ENCODE measurements at regions of chr22 and their contacts with region 1.

Region 1: GRCh38 chr22:46035742-46036557 is 59.0 kb upstream of the WNT7B start:
- DNase-seq: peak; percentile 99 to 100 (median 100)
- ATAC-seq: peak; percentile 88
- H3K4me3 ChIP-seq: peak overlapping the region; percentile 73 to 94
- H3K4me3 Mint-ChIP-seq: peak overlapping the region; percentile 84
- H3K27ac ChIP-seq: peak overlapping the region; percentile 98 to 100
- H3K27ac Mint-ChIP-seq: peak overlapping the region; percentile 97
- H3K4me1 ChIP-seq: peaks cover 18% of the 10 kb centered on the region
- H3K4me1 Mint-ChIP-seq: peaks cover 16% of the 10 kb centered on the region
- H3K27me3 ChIP-seq: no peaks in the 10 kb centered on the region
- H3K27me3 Mint-ChIP-seq: no peaks in the 10 kb centered on the region
- CTCF ChIP-seq: no peak

Region 2: DNA sequence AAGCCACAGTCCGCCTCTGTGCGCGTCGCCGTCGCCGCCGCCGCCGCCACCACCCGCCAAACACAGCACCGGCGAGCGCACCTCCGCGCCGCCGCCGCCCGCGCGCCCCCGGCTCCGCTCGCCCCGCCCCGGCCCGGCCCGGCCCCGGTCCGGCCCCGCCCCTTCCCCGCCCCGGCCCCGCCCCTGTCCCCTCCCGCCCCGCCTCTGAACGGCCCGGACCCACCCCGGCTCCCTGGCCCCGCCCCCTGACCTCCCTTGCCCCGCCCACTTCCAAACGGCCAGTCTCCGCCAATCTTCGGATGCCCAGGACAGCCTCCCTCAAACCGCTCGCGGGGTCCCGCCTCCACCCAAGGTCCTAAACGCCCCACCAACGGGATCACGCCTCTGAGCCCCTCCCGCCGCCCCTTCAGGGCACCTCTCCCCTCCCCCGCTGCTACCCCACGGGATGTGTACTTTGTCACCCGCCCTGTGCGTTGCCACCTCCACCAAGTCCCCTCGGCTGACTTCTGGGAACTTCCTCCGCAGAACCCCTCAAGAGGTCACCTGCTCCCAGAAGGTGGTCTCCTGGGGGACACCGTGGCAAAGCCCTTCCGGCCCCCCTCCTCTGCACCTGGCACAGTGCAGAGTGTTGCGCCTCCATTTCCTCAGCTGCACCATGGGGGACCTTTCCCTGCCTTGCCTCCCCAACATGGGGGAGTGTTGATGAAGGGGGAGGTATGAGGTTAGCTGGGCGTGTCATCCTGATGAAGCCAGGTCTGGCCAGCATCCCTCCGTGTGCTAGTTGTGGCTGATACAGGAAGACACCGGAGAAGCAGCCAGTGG is 794.9 kb before region 1 on chr22 and contains the start of gene KIAA0930:
- CTCF ChIA-PET with region 1: no interaction called
- POLR2A ChIA-PET with region 1: no interaction called
- intact Hi-C with region 1: loop called in 1 of 2 experiments (anchors 10 kb)
- DNase-seq: peak; percentile 73 to 93 (median 82)
- ATAC-seq: peak; percentile 75
- H3K4me3 ChIP-seq: peak within 1 kb of the TSS; percentile 70 to 76
- H3K4me3 Mint-ChIP-seq: peak within 1 kb of the TSS; percentile 91
- H3K27ac ChIP-seq: peak within 1 kb of the TSS; percentile 20 to 75
- H3K27ac Mint-ChIP-seq: peak within 1 kb of the TSS; percentile 87
- H3K4me1 ChIP-seq: peaks cover 28% of the 10 kb centered on the region
- H3K4me1 Mint-ChIP-seq: peaks cover 47% of the 10 kb centered on the region
- H3K27me3 ChIP-seq: no peaks in the 10 kb centered on the region
- H3K27me3 Mint-ChIP-seq: no peaks in the 10 kb centered on the region
- CTCF ChIP-seq: no peak
- total RNA-seq, gene KIAA0930: 6.6 to 11.7 TPM

Region 3: DNA sequence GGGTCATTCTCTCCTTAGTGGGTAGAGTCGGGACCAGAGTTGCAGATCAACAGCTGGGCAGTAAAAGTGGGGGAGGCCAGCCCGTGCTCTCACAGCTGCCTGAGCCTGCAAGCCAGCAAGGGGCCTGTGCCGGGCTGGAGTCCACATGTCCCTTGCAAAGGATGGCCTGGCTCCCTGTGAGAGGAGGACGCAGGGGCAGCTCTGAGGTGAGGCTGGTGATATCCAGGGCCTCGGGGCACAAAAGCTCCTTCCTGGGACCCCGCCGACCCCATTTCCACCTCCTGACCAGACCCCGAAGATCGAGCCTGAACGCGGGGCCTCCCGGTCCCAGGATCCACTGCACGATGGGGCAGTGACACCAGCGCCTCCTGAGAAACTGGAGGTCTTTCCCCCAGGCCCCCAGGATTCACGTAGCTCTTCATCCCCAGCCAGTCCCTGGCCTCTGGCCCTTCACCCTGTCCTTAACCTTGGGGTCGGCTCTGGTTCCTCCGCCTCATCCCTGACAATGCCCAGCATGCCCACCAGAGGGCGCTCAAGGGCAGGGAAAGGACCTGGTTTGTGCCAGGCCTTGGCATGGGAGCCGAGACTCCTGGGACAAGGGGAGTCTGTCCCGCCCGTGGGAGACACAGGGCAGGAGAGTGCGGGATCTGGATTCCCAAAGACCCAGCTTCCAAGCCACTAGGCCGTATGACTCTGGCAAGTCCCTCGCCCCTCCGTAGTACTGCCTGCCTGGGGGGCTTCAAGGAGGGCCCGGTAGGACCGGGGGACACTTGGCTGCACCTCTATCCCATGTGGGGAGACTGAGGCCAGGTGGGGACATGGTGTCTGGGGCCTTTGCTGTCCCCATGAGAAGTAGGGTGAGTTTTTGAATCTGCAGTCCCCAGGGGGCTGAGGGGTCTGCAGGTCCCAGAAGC is 41.2 kb before region 1 on chr22:
- CTCF ChIA-PET with region 1: interaction called, 14 read pairs
- POLR2A ChIA-PET with region 1: interaction called, 3 read pairs
- intact Hi-C with region 1: loop called in 1 of 2 experiments (anchors 5 kb)
- DNase-seq: peak; percentile 63 to 92 (median 75)
- ATAC-seq: peak; percentile 85
- H3K4me3 ChIP-seq: no peak overlapping the region
- H3K4me3 Mint-ChIP-seq: no peak overlapping the region
- H3K27ac ChIP-seq: peak overlapping the region in 1 of 2 experiments; percentile 59
- H3K27ac Mint-ChIP-seq: no peak overlapping the region
- H3K4me1 ChIP-seq: peaks cover 7% of the 10 kb centered on the region
- H3K4me1 Mint-ChIP-seq: peaks cover 7% of the 10 kb centered on the region
- H3K27me3 ChIP-seq: no peaks in the 10 kb centered on the region
- H3K27me3 Mint-ChIP-seq: no peaks in the 10 kb centered on the region
- CTCF ChIP-seq: peak; percentile 94

Region 4: DNA sequence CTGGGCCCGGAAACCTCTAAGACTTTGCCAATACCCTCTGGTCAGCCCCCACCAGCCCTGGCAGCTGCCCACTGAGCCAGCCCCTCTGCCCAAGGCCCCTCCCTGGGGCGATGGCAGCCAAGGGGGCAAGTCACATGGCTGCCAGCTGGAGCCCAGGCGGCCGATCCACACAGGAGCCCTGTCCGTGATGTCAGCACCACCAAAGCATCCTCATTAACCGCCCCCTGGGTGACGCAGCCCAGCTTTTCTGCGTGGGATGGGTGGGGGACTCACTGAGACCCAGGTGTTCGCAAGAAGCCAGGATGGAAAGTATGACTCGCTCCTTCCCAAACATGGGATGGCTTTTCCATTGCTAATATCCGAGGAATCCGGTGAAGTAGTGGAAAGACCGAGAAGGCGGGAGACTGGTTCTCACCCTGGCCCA is 12.4 kb before region 1 on chr22:
- CTCF ChIA-PET with region 1: no interaction called
- POLR2A ChIA-PET with region 1: no interaction called
- intact Hi-C with region 1: no loop called
- DNase-seq: no peak
- ATAC-seq: no peak
- H3K4me3 ChIP-seq: no peak overlapping the region
- H3K4me3 Mint-ChIP-seq: no peak overlapping the region
- H3K27ac ChIP-seq: no peak overlapping the region
- H3K27ac Mint-ChIP-seq: no peak overlapping the region
- H3K4me1 ChIP-seq: peaks cover 2% of the 10 kb centered on the region
- H3K4me1 Mint-ChIP-seq: peaks cover 8% of the 10 kb centered on the region
- H3K27me3 ChIP-seq: peaks cover 4 to 11% of the 10 kb centered on the region in 2 experiments
- H3K27me3 Mint-ChIP-seq: peaks cover 36% of the 10 kb centered on the region
- CTCF ChIP-seq: no peak

Region 5: DNA sequence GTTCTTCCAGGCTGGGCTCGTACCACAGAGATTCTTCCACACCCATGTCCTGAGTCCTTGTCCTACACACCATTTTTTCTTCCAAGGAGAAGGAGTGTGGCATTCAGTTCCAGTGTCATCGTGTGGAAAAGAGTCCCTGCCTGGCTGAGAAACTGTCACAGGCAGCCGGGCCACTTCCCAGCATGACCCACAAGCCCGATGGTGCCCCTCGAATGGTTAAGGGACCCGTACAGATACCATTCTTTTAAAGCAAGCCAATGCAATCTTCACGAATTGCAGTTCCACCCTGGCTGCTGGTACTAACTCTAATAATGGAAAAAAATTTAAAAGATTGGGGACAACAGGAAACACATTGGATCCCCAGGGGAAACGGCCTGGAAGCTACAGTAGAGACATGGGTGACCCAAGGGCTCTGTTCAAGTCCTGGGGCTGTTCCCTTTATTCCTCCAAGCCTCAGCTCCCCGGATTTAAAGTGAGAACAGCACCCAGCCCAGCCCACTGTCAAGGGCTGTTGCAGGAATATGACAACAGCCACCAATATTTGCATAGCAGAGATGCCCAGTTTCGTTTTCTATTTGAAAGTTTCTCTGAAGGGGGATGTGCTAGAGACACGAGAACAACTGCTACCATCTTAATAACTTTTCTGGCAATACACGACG is 21.9 kb after region 1 on chr22:
- CTCF ChIA-PET with region 1: interaction called, 12 read pairs
- POLR2A ChIA-PET with region 1: interaction called, 17 read pairs
- intact Hi-C with region 1: loop called in 1 of 2 experiments (anchors 1 kb)
- DNase-seq: peak in 3 of 9 experiments; percentile 27 to 61 (median 44)
- ATAC-seq: peak; percentile 55
- H3K4me3 ChIP-seq: no peak overlapping the region
- H3K4me3 Mint-ChIP-seq: peak overlapping the region; percentile 54
- H3K27ac ChIP-seq: peak overlapping the region in 1 of 2 experiments; percentile 45
- H3K27ac Mint-ChIP-seq: peak overlapping the region; percentile 86
- H3K4me1 ChIP-seq: peaks cover 35% of the 10 kb centered on the region
- H3K4me1 Mint-ChIP-seq: peaks cover 38% of the 10 kb centered on the region
- H3K27me3 ChIP-seq: no peaks in the 10 kb centered on the region
- H3K27me3 Mint-ChIP-seq: peaks cover 7% of the 10 kb centered on the region
- CTCF ChIP-seq: no peak

Region 6: DNA sequence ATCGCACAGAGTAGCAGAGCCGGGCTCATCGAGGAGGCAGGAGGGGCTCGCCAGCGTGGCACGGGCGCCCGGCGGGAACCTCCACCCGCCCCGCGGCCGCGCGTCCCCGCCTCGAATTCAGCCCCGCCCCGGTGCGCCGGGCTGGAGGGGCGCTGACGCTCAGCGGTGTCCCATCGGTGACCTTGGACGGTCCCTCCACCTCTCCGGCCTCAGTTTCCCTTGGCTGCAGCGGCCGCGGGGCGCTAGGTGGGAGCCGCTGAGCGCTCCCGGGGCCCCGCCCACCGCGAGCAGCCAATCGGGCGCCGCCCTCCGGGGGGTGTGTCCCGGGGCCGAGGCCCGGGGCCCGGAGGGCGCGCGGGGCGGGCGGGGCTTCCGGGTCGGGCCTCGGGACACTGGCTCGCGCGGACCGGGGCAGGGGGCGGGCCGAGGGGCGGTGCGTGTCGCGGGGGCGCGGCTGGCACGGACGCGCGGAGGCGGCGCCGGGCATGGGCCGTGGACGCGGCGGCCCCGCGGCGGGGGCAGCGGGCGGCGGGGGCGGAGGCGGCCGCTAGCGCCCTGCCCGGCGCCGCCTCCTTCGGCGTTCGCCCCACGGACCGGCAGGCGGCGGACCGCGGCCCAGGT is 114.2 kb after region 1 on chr22 and contains the start of gene PPARA:
- CTCF ChIA-PET with region 1: interaction called, 3 read pairs
- POLR2A ChIA-PET with region 1: interaction called, 10 read pairs
- intact Hi-C with region 1: loop called in 1 of 2 experiments (anchors 1 kb)
- DNase-seq: peak; percentile 60 to 93 (median 89)
- ATAC-seq: peak; percentile 77
- H3K4me3 ChIP-seq: peak within 1 kb of the TSS; percentile 82 to 91
- H3K4me3 Mint-ChIP-seq: peak within 1 kb of the TSS; percentile 83
- H3K27ac ChIP-seq: peak within 1 kb of the TSS; percentile 46 to 60
- H3K27ac Mint-ChIP-seq: peak within 1 kb of the TSS; percentile 89
- H3K4me1 ChIP-seq: peaks cover 21% of the 10 kb centered on the region
- H3K4me1 Mint-ChIP-seq: peaks cover 20% of the 10 kb centered on the region
- H3K27me3 ChIP-seq: no peaks in the 10 kb centered on the region
- H3K27me3 Mint-ChIP-seq: no peaks in the 10 kb centered on the region
- CTCF ChIP-seq: no peak
- total RNA-seq, gene PPARA: 4.4 to 6.9 TPM

Region 7: DNA sequence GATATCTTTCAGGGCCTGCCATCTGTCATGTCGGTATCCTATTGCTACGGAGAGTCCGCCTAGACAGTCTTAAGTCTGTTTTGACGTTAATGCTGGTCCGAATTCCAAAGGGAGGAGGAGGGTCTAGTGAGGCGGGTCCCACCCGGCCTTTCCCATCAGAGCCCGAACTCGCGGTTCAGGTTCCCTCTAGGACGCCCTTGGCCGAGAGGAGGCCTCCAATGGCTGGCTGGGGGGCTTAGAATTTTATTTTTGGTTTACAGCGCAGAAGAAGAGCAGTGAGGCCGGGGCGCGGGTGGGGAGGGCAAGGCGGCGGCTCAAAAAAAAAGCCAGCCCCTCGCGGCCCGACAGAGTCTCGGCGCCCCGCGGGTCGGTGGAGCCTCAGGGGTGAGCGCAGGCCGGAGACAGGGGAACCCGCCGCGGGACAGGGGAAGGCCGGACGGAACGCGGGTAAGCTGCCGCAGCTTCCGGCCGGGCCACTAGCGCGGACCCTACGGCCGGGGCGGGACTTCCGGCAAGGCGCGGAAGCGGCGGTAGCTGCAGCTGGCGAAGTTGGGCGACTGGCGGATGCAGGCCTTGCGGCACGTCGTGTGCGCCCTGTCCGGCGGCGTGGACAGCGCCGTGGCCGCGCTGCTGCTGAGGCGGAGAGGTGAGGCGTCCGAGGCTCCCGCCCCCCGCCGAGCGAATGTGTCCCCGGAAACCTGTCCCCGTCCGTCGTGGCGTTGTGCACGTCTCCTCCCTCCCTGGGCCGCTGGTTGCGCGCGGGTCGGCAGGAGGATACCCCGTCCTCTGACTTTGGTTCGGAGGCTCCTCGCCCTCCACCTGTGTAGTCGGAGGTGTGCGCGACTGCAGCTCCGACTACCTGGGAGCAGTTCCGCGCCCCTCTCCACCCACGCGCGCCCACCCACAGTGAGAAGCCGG is 299.5 kb after region 1 on chr22 and contains the start of gene TRMU:
- CTCF ChIA-PET with region 1: no interaction called
- POLR2A ChIA-PET with region 1: no interaction called
- intact Hi-C with region 1: loop called in 1 of 2 experiments (anchors 2 kb)
- DNase-seq: peak; percentile 29 to 86 (median 75)
- ATAC-seq: peak; percentile 80
- H3K4me3 ChIP-seq: peak within 1 kb of the TSS; percentile 80 to 94
- H3K4me3 Mint-ChIP-seq: peak within 1 kb of the TSS; percentile 95
- H3K27ac ChIP-seq: peak within 1 kb of the TSS; percentile 68 to 86
- H3K27ac Mint-ChIP-seq: peak within 1 kb of the TSS; percentile 91
- H3K4me1 ChIP-seq: peaks cover 16% of the 10 kb centered on the region
- H3K4me1 Mint-ChIP-seq: peaks cover 39% of the 10 kb centered on the region
- H3K27me3 ChIP-seq: no peaks in the 10 kb centered on the region
- H3K27me3 Mint-ChIP-seq: no peaks in the 10 kb centered on the region
- CTCF ChIP-seq: no peak
- total RNA-seq, gene TRMU: 51.0 to 56.3 TPM

Measured in CD8-positive, alpha-beta T cell (primary cell).